SK-N-SH (cell line): ENCODE measurements at regions of chr3 and their contacts with region 1.

Region 1: DNA sequence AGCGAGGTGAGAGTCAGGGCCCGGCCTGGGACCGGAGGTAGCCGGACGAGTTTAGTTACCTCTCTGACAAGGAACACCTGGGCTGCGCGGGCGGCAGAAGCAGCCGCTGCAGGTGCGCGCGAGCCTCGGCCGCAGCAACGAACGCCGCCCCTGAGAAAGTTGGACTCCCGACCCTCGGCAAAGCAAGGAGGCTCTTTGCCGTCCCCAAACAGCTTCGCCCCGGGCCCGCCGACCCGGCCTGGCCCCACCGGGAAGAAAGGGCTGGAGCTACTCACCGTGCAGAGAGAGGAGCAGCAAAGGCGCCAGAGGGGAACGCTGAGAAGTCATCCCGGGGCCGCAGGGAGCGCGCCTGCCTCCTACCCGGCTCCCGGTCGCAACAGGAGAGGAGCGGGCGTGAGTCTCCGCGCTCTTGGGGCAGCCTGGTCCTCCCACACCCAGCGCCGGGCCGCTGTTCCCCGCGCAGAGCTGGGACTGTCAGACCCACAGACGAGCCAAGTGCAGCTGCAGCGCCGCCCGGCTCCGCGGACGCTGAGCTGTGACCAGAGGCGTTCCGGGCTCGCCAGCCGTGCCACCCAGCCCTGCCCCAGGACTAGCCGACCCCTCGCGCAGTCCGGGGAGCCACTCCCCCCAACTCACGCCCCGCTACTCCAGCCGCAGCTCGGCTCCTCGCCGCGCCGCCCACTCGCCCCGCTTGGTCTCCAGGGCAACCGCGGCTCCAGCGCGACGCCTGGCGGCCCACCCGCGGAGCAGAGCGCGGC is at the start of gene IGSF11:
- DNase-seq: peak; percentile 96
- H3K4me3 ChIP-seq: peak within 1 kb of the TSS; percentile 60 to 69
- H3K27ac ChIP-seq: no peak within 1 kb of the TSS
- H3K4me1 ChIP-seq: no peaks in the 10 kb centered on the region; a peak in 1 of 4 replicates
- H3K27me3 ChIP-seq: peaks cover 27% of the 10 kb centered on the region
- CTCF ChIP-seq: peak; percentile 54
- EP300 ChIP-seq: no peak
- RAD21 ChIP-seq: peak; percentile 62
- polyA plus RNA-seq, gene IGSF11: 0.07 and 0.08 TPM in 2 replicates

Region 2: GRCh38 chr3:118890186-118890585 is 144.2 kb before region 1 on chr3:
- CTCF ChIA-PET with region 1: interaction called, 432 read pairs
- POLR2A ChIA-PET with region 1: no interaction called
- DNase-seq: no peak
- H3K4me3 ChIP-seq: no peak overlapping the region
- H3K27ac ChIP-seq: no peak overlapping the region
- H3K4me1 ChIP-seq: no peaks in the 10 kb centered on the region
- H3K27me3 ChIP-seq: no peaks in the 10 kb centered on the region
- CTCF ChIP-seq: no peak
- EP300 ChIP-seq: no peak
- RAD21 ChIP-seq: no peak

Region 3: DNA sequence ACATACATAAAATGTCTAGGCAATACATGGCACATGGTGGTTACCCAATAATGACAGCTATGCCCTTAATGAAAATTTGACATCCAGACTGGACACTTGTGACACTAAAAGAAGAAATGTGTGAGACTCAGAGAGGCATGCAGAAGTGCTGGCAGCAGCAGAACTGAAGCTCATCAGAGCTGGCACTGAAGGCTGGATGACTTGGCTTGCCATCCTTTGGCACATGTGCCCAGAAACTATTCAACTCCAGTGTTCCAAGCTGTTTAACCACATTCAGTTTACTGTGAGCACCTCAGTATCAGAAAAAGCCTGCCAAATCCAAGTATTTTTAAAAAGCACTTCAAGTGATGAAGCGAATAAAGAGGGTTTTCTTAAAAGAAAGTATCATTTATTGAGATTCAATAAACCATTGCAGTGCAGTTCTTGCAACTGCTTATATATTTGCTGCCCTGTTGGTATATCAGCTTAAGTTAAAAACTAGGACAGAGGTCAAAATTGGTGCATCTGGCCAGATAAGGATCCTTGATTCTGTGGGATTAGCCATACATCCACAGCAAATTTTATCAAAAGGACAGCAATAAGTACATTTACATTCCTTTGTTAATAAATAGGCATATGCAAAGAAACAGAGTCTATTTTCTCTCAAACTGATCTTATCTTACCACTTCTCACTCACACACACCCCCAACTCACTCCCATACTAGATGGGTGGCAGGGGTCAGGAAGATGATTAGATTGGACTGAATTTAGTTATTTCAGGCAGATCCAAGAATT is 15.6 kb before region 1 on chr3:
- CTCF ChIA-PET with region 1: interaction called, 13 read pairs
- POLR2A ChIA-PET with region 1: interaction called, 3 read pairs
- DNase-seq: peak; percentile 22
- H3K4me3 ChIP-seq: no peak overlapping the region
- H3K27ac ChIP-seq: no peak overlapping the region; a peak in 1 of 4 replicates
- H3K4me1 ChIP-seq: peaks cover 0 to 10% of the 10 kb centered on the region in 2 experiments; a peak in 2 of 4 replicates
- H3K27me3 ChIP-seq: no peaks in the 10 kb centered on the region
- CTCF ChIP-seq: no peak
- EP300 ChIP-seq: peak in 1 of 2 experiments; percentile 41; a peak in 1 of 4 replicates
- RAD21 ChIP-seq: no peak

Region 4: GRCh38 chr3:119091926-119092670 is 57.7 kb after region 1 on chr3:
- CTCF ChIA-PET with region 1: interaction called, 34 read pairs
- POLR2A ChIA-PET with region 1: no interaction called
- DNase-seq: no peak
- H3K4me3 ChIP-seq: no peak overlapping the region
- H3K27ac ChIP-seq: no peak overlapping the region
- H3K4me1 ChIP-seq: no peaks in the 10 kb centered on the region
- H3K27me3 ChIP-seq: no peaks in the 10 kb centered on the region
- CTCF ChIP-seq: no peak
- EP300 ChIP-seq: no peak
- RAD21 ChIP-seq: no peak

Region 5: GRCh38 chr3:119098619-119099222 is 64.3 kb after region 1 on chr3:
- CTCF ChIA-PET with region 1: interaction called, 34 read pairs
- POLR2A ChIA-PET with region 1: no interaction called
- DNase-seq: peak; percentile 38
- H3K4me3 ChIP-seq: no peak overlapping the region; a peak in 1 of 4 replicates
- H3K27ac ChIP-seq: no peak overlapping the region
- H3K4me1 ChIP-seq: no peaks in the 10 kb centered on the region
- H3K27me3 ChIP-seq: no peaks in the 10 kb centered on the region
- CTCF ChIP-seq: peak; percentile 89
- EP300 ChIP-seq: no peak
- RAD21 ChIP-seq: peak; percentile 95